ENCODE measurements at regions of chr9 and their contacts with region 1.

Region 1: GRCh38 chr9:129495534-129496325 is 125.2 kb downstream of the C9orf50 start:
- DNase-seq: peak; percentile 92
- ATAC-seq: peak; percentile 86
- H3K4me3 Mint-ChIP-seq: peak overlapping the region; percentile 74
- H3K27ac Mint-ChIP-seq: peak overlapping the region; percentile 67
- H3K4me1 Mint-ChIP-seq: peaks cover 33% of the 10 kb centered on the region
- H3K27me3 Mint-ChIP-seq: no peaks in the 10 kb centered on the region

Region 2: DNA sequence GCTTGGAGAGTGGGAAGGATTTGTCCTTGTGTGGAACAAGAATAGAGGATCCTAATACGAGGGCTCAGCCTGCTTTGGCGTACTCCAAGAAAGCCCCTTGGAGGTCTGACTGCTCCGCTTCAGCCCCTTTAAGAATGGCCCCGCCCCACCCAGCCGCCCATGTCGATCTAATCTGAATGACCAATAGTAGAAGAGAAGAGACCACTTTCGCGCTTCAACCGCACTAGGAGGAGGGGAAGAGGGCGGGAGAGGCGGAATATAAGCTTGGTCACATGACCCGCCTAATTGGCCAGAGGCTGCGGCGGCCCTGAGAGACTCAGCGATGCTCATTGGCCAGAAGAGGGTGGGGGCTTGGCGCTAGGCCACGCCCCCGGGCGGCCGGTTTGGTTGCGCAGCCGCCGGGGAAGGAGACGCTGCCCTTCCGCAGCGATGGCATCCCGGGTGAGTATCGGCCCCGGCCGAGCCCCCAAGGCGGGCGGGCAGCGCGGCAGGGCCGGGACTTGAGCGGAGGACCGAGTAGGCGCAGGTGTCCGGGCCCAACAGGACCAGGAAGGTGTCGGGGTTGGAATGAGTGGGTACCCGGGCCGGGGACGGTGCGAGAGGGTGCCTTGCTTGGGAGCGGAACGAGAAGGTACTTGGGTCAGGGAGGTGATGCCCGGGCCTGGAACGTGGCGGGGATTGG is 459.3 kb before region 1 on chr9 and contains the start of gene MIGA2:
- CTCF ChIA-PET with region 1: no interaction called
- POLR2A ChIA-PET with region 1: no interaction called
- intact Hi-C with region 1: loop called in 1 of 2 experiments (anchors 1 kb)
- DNase-seq: peak; percentile 96
- ATAC-seq: peak; percentile 99
- H3K4me3 Mint-ChIP-seq: peak within 1 kb of the TSS; percentile 98
- H3K27ac Mint-ChIP-seq: peak within 1 kb of the TSS; percentile 83
- H3K4me1 Mint-ChIP-seq: peaks cover 27% of the 10 kb centered on the region
- H3K27me3 Mint-ChIP-seq: no peaks in the 10 kb centered on the region
- total RNA-seq, gene MIGA2: 15.7 to 25.8 TPM

Region 3: GRCh38 chr9:129446828-129447550 is 48.7 kb before region 1 on chr9:
- CTCF ChIA-PET with region 1: no interaction called
- POLR2A ChIA-PET with region 1: no interaction called
- intact Hi-C with region 1: no loop called
- DNase-seq: no peak
- ATAC-seq: no peak
- H3K4me3 Mint-ChIP-seq: no peak overlapping the region
- H3K27ac Mint-ChIP-seq: no peak overlapping the region
- H3K4me1 Mint-ChIP-seq: no peaks in the 10 kb centered on the region
- H3K27me3 Mint-ChIP-seq: no peaks in the 10 kb centered on the region

Region 4: GRCh38 chr9:129460323-129461261 is 35.1 kb before region 1 on chr9:
- CTCF ChIA-PET with region 1: interaction called, 11 read pairs
- POLR2A ChIA-PET with region 1: interaction called, 3 read pairs
- intact Hi-C with region 1: loop called in 1 of 2 experiments (anchors 1 kb)
- DNase-seq: peak; percentile 96
- ATAC-seq: peak; percentile 87
- H3K4me3 Mint-ChIP-seq: peak overlapping the region; percentile 72
- H3K27ac Mint-ChIP-seq: peak overlapping the region; percentile 92
- H3K4me1 Mint-ChIP-seq: peaks cover 38% of the 10 kb centered on the region
- H3K27me3 Mint-ChIP-seq: no peaks in the 10 kb centered on the region

Region 5: DNA sequence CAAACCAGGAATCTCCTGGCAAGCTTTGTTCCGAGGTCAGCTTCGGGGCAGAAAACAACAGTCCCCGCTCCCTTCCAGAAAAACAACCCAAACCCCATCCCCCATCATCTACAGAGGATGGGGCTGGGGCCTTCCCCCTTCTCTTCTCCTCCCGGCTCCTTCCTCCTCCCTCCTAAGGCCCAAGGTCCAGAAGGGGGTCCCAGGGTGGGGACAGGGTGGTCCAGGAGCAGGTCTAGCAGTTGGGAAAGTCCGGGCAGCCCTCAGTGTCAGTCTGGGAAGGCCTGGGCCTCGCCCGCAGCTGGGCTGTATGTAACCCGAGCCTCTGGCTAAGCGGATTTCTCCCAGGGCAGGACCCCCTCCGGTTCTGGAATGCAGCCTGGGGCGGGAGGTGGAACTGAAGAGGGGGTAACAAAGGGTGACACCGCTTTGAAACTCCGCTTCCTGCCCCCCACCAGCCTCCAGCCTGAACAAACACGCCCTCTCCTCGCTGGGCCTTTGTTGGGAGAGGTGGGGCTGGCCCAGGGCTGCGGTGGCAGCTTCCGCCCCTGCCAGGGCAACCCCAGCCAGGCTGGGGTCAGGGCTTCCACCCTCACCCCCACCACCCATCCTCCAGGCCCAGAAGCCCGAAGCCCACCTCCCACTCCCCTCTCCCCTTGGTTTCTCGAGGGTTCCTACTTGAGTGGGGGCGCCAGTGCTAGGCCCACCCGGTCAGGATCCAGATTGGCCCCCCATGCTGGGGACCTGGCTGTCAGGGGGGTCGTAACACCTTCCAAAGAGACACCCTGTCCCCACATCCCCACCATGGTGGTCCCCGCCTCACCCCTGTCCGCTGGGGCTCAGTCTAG is 61.7 kb after region 1 on chr9:
- CTCF ChIA-PET with region 1: no interaction called
- POLR2A ChIA-PET with region 1: no interaction called
- intact Hi-C with region 1: no loop called
- DNase-seq: no peak
- ATAC-seq: no peak
- H3K4me3 Mint-ChIP-seq: no peak overlapping the region
- H3K27ac Mint-ChIP-seq: no peak overlapping the region
- H3K4me1 Mint-ChIP-seq: no peaks in the 10 kb centered on the region
- H3K27me3 Mint-ChIP-seq: no peaks in the 10 kb centered on the region

Measured in activated CD4-positive, alpha-beta T cell treated with anti-CD3 and anti-CD28 coated beads for 36 hours (primary cell).